OCI-LY7 (cell line): ENCODE measurements at regions of chr6 and their contacts with region 1.

Region 1: GRCh38 chr6:10528170-10528981 is 7.2 kb downstream of the GCNT2 start:
- DNase-seq: peak; percentile 65
- H3K4me3 ChIP-seq: peak overlapping the region; percentile 89
- H3K27ac ChIP-seq: peak overlapping the region; percentile 95
- H3K4me1 ChIP-seq: peaks cover 29% of the 10 kb centered on the region
- CTCF ChIP-seq: peak; percentile 33; the same call in 1 of the 2 replicates

Region 2: DNA sequence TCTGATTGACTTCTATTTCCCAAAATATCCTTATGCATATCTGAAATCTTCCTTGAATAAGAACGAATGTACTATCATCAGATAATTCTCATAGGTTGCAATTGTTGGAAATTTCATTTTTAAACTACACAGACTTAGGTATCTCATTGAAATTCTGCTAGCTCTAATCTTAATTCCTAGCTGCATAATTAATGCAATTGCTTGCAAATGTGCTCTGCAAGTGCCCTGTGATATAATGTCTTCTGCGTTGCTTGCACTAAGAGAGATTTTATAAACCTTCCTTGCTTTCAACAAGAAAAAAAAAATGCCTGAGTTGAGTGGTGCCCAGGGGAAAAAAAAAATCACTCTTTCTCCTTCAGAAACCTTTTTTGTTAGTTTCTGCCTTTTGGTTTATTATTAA is 468.4 kb before region 1 on chr6:
- CTCF ChIA-PET with region 1: no interaction called
- POLR2A ChIA-PET with region 1: no interaction called
- intact Hi-C with region 1: no loop called
- DNase-seq: no peak
- H3K4me3 ChIP-seq: no peak overlapping the region
- H3K27ac ChIP-seq: no peak overlapping the region
- H3K4me1 ChIP-seq: no peaks in the 10 kb centered on the region
- CTCF ChIP-seq: no peak

Region 3: GRCh38 chr6:10177703-10178102 is 350.7 kb before region 1 on chr6:
- CTCF ChIA-PET with region 1: no interaction called
- POLR2A ChIA-PET with region 1: no interaction called
- intact Hi-C with region 1: no loop called
- DNase-seq: no peak
- H3K4me3 ChIP-seq: no peak overlapping the region
- H3K27ac ChIP-seq: no peak overlapping the region
- H3K4me1 ChIP-seq: no peaks in the 10 kb centered on the region
- CTCF ChIP-seq: no peak

Region 4: GRCh38 chr6:10487668-10488327 is 40.6 kb before region 1 on chr6:
- CTCF ChIA-PET with region 1: no interaction called
- POLR2A ChIA-PET with region 1: no interaction called
- intact Hi-C with region 1: no loop called
- DNase-seq: no peak
- H3K4me3 ChIP-seq: no peak overlapping the region
- H3K27ac ChIP-seq: no peak overlapping the region
- H3K4me1 ChIP-seq: no peaks in the 10 kb centered on the region
- CTCF ChIP-seq: no peak

Region 5: GRCh38 chr6:10510592-10511367 is 17.6 kb before region 1 on chr6:
- CTCF ChIA-PET with region 1: no interaction called
- POLR2A ChIA-PET with region 1: interaction called, 11 read pairs
- intact Hi-C with region 1: no loop called
- DNase-seq: peak; percentile 82
- H3K4me3 ChIP-seq: peak overlapping the region; percentile 11
- H3K27ac ChIP-seq: no peak overlapping the region
- H3K4me1 ChIP-seq: peaks cover 17% of the 10 kb centered on the region
- CTCF ChIP-seq: peak; percentile 96